Endothelial cell of umbilical vein (primary cell): ENCODE measurements at regions of chr1 and their contacts with region 1.

Region 1: DNA sequence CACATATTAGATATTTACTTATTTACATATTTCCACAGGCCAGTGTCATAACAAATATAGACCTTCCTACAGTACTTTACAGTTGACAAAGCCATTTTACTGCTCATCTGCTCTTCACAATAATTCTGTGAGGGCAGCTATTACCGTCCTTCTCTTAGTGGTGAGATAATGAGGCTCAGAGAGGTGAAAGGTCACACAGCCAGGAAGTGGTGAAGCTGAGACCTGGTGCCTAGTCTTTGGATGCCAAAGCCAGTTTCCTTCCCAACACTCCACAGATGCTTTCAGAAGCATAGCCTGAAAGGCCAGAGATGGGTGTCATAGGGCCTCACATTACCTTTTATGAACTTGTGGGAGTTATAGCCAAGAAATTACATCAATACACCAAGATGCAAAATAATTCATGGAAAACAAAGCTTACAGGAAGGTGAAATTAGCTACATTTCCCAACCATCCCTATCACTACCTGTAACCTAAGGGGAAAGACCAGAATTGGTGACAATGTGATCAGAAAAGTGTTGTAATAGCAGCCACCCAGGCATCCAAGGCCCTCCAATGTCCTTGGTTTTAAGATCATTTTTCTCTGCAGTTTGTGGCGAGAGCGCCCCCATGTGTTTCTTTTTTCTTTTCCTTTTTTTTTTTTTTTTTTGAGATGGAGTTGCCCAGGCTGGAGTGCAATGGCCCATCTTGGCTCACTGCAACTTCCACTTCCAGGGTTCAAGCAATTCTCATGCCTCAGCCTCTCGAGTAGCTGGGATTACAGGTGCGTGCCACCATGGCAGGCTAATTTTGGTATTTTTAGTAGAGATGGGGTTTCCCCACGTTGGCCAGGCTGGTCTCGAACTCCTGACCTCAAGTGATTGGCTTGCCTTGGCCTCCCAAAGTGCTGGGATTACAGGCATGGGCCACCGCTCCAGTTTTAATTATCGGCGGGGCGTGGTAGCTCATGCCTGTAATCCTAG is 26.5 kb upstream of the RPL11 start:
- DNase-seq: peak; percentile 39
- H3K4me3 ChIP-seq: no peak overlapping the region
- H3K27ac ChIP-seq: no peak overlapping the region
- H3K4me1 ChIP-seq: no peaks in the 10 kb centered on the region
- H3K27me3 ChIP-seq: no peaks in the 10 kb centered on the region
- CTCF ChIP-seq: peak; percentile 23 to 30
- POLR2A ChIP-seq: no peak

Region 2: GRCh38 chr1:23651069-23651808 is 13.9 kb before region 1 on chr1:
- CTCF ChIA-PET with region 1: interaction called, 10 read pairs
- POLR2A ChIA-PET with region 1: no interaction called
- dilution Hi-C with region 1: no loop called
- intact Hi-C with region 1: no loop called
- DNase-seq: peak; percentile 41
- H3K4me3 ChIP-seq: no peak overlapping the region
- H3K27ac ChIP-seq: no peak overlapping the region
- H3K4me1 ChIP-seq: no peaks in the 10 kb centered on the region
- H3K27me3 ChIP-seq: peaks cover 7 to 13% of the 10 kb centered on the region in 2 experiments
- CTCF ChIP-seq: no peak
- POLR2A ChIP-seq: no peak

Region 3: DNA sequence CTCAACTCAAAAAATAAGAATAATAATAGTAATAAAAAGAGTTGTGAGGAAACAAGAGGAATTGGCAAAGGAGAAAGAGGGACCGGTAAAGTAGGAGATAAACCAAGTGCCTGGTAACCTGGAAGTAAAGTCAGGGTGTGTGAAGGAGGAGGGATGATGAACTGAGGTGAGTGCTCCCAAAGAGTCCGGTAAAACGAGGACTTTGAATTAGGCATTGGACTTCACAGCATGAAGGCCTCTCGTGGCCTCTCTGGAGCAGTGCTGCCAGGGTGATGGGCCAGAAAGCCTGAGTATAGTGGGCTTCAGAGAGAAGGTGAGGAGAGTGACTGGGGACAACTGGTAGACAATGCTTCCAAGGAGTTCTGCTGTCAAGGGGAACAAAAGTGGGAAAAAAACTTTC is 44.1 kb after region 1 on chr1:
- CTCF ChIA-PET with region 1: no interaction called
- POLR2A ChIA-PET with region 1: no interaction called
- dilution Hi-C with region 1: no loop called
- intact Hi-C with region 1: no loop called
- DNase-seq: no peak
- H3K4me3 ChIP-seq: no peak overlapping the region
- H3K27ac ChIP-seq: no peak overlapping the region
- H3K4me1 ChIP-seq: no peaks in the 10 kb centered on the region
- H3K27me3 ChIP-seq: no peaks in the 10 kb centered on the region
- CTCF ChIP-seq: no peak
- POLR2A ChIP-seq: no peak

Region 4: GRCh38 chr1:23800400-23801337 is 135.6 kb after region 1 on chr1 and contains the start of gene GALE:
- CTCF ChIA-PET with region 1: no interaction called
- POLR2A ChIA-PET with region 1: no interaction called
- dilution Hi-C with region 1: no loop called
- intact Hi-C with region 1: no loop called
- DNase-seq: peak; percentile 95
- H3K4me3 ChIP-seq: peak within 1 kb of the TSS; percentile 45 to 83 (median 73)
- H3K27ac ChIP-seq: peak within 1 kb of the TSS; percentile 62
- H3K4me1 ChIP-seq: peaks cover 15% of the 10 kb centered on the region
- H3K27me3 ChIP-seq: no peaks in the 10 kb centered on the region
- CTCF ChIP-seq: no peak
- POLR2A ChIP-seq: peak; percentile 61
- total RNA-seq, gene GALE: 39.2 and 42.9 TPM in 2 replicates